ENCODE measurements at regions of chr16 and their contacts with region 1.

Region 1: GRCh38 chr16:85554112-85554813 is 58.9 kb upstream of the GSE1 start:
- DNase-seq: peak; percentile 45
- ATAC-seq: peak; percentile 62
- H3K4me3 Mint-ChIP-seq: peak overlapping the region; percentile 96
- H3K27ac Mint-ChIP-seq: peak overlapping the region; percentile 97
- H3K4me1 Mint-ChIP-seq: peaks cover 39% of the 10 kb centered on the region
- H3K27me3 Mint-ChIP-seq: no peaks in the 10 kb centered on the region
- CTCF ChIP-seq: no peak

Region 2: GRCh38 chr16:84175350-84176081 is 1378.7 kb before region 1 on chr16:
- CTCF ChIA-PET with region 1: no interaction called
- POLR2A ChIA-PET with region 1: no interaction called
- intact Hi-C with region 1: no loop called
- DNase-seq: no peak
- ATAC-seq: peak; percentile 90
- H3K4me3 Mint-ChIP-seq: no peak overlapping the region
- H3K27ac Mint-ChIP-seq: no peak overlapping the region
- H3K4me1 Mint-ChIP-seq: peaks cover 5% of the 10 kb centered on the region
- H3K27me3 Mint-ChIP-seq: peaks cover 3% of the 10 kb centered on the region
- CTCF ChIP-seq: no peak

Region 3: DNA sequence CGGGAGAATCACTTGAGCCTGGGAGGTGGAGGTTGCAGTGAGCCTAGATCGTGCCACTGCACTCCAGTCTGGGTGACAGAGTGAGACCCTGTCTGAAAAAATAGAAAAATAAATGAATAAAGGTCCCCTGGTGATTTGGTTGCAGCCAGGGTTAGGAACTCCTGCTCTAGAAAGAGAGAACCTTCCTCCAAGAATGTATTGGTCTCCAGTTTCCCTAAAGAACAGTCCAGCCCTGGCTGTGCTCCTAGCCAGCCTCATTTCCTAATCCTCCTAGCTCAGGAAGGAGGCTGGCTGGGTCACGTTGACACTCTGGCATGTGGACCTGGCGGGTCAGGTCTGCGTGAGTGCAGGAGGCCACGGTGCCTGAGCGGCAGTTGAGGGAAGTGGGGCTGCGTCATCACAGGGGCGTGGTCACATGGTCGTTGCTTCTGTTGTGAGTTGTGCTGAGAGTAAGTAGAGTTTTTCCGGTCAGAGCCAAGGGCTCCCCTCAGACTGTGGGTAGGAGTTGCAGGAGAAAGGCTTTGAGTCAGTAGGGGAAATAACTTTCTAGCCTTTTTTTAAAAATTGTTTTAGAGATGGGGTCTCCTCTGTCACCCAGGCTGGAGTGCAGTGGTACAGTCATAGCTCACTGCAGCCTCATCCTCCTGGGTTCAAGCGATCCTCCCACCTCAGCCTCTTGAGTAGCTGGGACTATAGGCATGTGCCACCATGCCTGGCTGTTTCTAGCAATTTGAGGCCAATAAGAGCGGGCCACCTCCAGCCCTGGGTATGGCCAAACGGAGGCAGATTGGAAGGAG is 248.1 kb before region 1 on chr16:
- CTCF ChIA-PET with region 1: no interaction called
- POLR2A ChIA-PET with region 1: interaction called, 17 read pairs
- intact Hi-C with region 1: loop called (anchors 1 kb)
- DNase-seq: peak; percentile 72
- ATAC-seq: peak; percentile 69
- H3K4me3 Mint-ChIP-seq: peak overlapping the region; percentile 29
- H3K27ac Mint-ChIP-seq: peak overlapping the region; percentile 71
- H3K4me1 Mint-ChIP-seq: peaks cover 64% of the 10 kb centered on the region
- H3K27me3 Mint-ChIP-seq: peaks cover 2% of the 10 kb centered on the region
- CTCF ChIP-seq: no peak

Region 4: GRCh38 chr16:85491058-85491771 is 63.0 kb before region 1 on chr16:
- CTCF ChIA-PET with region 1: interaction called, 9 read pairs
- POLR2A ChIA-PET with region 1: interaction called, 6 read pairs
- intact Hi-C with region 1: loop called (anchors 2 kb)
- DNase-seq: peak; percentile 37
- ATAC-seq: peak; percentile 62
- H3K4me3 Mint-ChIP-seq: no peak overlapping the region
- H3K27ac Mint-ChIP-seq: no peak overlapping the region
- H3K4me1 Mint-ChIP-seq: no peaks in the 10 kb centered on the region
- H3K27me3 Mint-ChIP-seq: peaks cover 13% of the 10 kb centered on the region
- CTCF ChIP-seq: no peak

Region 5: GRCh38 chr16:85503679-85504231 is 50.5 kb before region 1 on chr16:
- CTCF ChIA-PET with region 1: no interaction called
- POLR2A ChIA-PET with region 1: no interaction called
- intact Hi-C with region 1: no loop called
- DNase-seq: no peak
- ATAC-seq: no peak
- H3K4me3 Mint-ChIP-seq: no peak overlapping the region
- H3K27ac Mint-ChIP-seq: no peak overlapping the region
- H3K4me1 Mint-ChIP-seq: peaks cover 3% of the 10 kb centered on the region
- H3K27me3 Mint-ChIP-seq: peaks cover 3% of the 10 kb centered on the region
- CTCF ChIP-seq: no peak

Region 6: DNA sequence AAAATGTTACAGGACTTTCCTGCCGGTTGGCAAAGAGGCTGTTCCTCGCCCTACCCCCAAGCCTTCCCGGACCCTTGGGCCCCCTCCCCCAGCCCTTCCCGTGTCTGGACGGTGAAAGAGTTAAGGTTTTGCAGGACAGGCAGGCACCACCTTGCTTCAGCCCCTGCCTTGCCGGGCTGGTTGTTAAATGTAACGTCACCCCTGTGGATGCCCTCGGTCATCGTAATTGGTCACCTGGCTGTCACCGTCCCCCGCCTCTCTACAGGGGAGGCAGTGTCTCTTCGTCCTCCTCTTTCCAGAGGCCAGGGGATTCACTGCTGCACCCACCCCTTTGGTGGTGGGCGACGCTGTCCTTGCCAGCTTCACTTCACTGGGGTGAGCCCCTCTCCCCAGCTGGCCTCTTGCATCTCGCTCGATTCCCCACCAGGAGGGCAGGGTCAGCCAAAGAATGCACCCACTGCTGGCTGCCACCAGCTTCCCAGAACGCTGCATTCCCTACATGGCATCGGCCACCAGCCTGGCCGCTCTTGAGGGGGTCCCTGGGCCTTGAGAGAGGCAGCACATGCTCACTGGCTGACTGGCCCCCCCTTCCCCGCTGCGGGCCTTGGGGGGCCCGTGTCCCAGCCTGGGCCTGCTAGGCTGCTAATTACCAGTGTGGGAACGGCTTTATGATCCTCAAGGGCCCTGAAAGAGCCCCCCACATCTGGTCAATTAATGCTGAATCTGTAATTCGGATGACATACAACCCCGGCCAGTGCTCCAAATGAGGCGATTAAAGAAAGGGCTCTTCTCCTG is 33.7 kb after region 1 on chr16:
- CTCF ChIA-PET with region 1: no interaction called
- POLR2A ChIA-PET with region 1: no interaction called
- intact Hi-C with region 1: no loop called
- DNase-seq: no peak
- ATAC-seq: no peak
- H3K4me3 Mint-ChIP-seq: no peak overlapping the region
- H3K27ac Mint-ChIP-seq: no peak overlapping the region
- H3K4me1 Mint-ChIP-seq: peaks cover 12% of the 10 kb centered on the region
- H3K27me3 Mint-ChIP-seq: no peaks in the 10 kb centered on the region
- CTCF ChIP-seq: no peak

Region 7: DNA sequence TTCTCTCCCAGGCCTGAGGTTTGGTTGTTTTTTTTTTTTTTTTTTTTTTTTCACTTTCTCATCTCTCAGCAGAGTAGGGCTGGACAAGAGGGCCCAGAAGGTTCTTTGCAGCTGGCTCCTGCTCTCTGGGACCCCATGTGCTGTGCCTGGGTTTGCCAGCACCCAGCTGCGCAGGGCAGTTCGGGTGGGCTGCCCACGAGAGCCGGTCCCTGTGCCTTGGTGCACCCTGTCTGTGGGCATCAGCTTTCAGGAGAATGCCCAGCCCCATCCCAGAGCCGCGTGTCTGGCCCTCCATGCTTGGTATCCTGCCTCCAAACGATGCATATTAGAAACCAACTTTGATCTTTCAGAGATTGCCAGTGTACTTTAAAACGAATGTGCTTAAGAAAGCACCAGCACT is 43.9 kb after region 1 on chr16:
- CTCF ChIA-PET with region 1: no interaction called
- POLR2A ChIA-PET with region 1: no interaction called
- intact Hi-C with region 1: no loop called
- DNase-seq: no peak
- ATAC-seq: no peak
- H3K4me3 Mint-ChIP-seq: no peak overlapping the region
- H3K27ac Mint-ChIP-seq: no peak overlapping the region
- H3K4me1 Mint-ChIP-seq: peaks cover 57% of the 10 kb centered on the region
- H3K27me3 Mint-ChIP-seq: no peaks in the 10 kb centered on the region
- CTCF ChIP-seq: no peak

Region 8: GRCh38 chr16:85615852-85616606 is 61.8 kb after region 1 on chr16:
- CTCF ChIA-PET with region 1: interaction called, 22 read pairs
- POLR2A ChIA-PET with region 1: interaction called, 88 read pairs
- intact Hi-C with region 1: no loop called
- DNase-seq: peak; percentile 75
- ATAC-seq: peak; percentile 60
- H3K4me3 Mint-ChIP-seq: peak overlapping the region; percentile 76
- H3K27ac Mint-ChIP-seq: peak overlapping the region; percentile 72
- H3K4me1 Mint-ChIP-seq: peaks cover 47% of the 10 kb centered on the region
- H3K27me3 Mint-ChIP-seq: no peaks in the 10 kb centered on the region
- CTCF ChIP-seq: no peak

Region 9: GRCh38 chr16:85898521-85899442 is 344.5 kb after region 1 on chr16 and contains the start of gene IRF8:
- CTCF ChIA-PET with region 1: no interaction called
- POLR2A ChIA-PET with region 1: no interaction called
- intact Hi-C with region 1: loop called (anchors 10 kb)
- DNase-seq: peak; percentile 89
- ATAC-seq: peak; percentile 64
- H3K4me3 Mint-ChIP-seq: peak within 1 kb of the TSS; percentile 84
- H3K27ac Mint-ChIP-seq: peak within 1 kb of the TSS; percentile 95
- H3K4me1 Mint-ChIP-seq: peaks cover 63% of the 10 kb centered on the region
- H3K27me3 Mint-ChIP-seq: no peaks in the 10 kb centered on the region
- CTCF ChIP-seq: no peak
- total RNA-seq, gene IRF8: 234 and 248 TPM in 2 replicates

Region 10: GRCh38 chr16:87387942-87388817 is 1833.9 kb after region 1 on chr16:
- CTCF ChIA-PET with region 1: no interaction called
- POLR2A ChIA-PET with region 1: no interaction called
- intact Hi-C with region 1: loop called (anchors 10 kb)
- DNase-seq: peak; percentile 59
- ATAC-seq: peak; percentile 62
- H3K4me3 Mint-ChIP-seq: peak overlapping the region; percentile 70
- H3K27ac Mint-ChIP-seq: peak overlapping the region; percentile 98
- H3K4me1 Mint-ChIP-seq: peaks cover 52% of the 10 kb centered on the region
- H3K27me3 Mint-ChIP-seq: peaks cover 2% of the 10 kb centered on the region
- CTCF ChIP-seq: no peak

Measured in activated B cell treated with CpG ODN at 0.5 μM for 24 hours (primary cell).